IMR-90 (cell line): ENCODE measurements at regions of chr15 and their contacts with region 1.

Region 1: DNA sequence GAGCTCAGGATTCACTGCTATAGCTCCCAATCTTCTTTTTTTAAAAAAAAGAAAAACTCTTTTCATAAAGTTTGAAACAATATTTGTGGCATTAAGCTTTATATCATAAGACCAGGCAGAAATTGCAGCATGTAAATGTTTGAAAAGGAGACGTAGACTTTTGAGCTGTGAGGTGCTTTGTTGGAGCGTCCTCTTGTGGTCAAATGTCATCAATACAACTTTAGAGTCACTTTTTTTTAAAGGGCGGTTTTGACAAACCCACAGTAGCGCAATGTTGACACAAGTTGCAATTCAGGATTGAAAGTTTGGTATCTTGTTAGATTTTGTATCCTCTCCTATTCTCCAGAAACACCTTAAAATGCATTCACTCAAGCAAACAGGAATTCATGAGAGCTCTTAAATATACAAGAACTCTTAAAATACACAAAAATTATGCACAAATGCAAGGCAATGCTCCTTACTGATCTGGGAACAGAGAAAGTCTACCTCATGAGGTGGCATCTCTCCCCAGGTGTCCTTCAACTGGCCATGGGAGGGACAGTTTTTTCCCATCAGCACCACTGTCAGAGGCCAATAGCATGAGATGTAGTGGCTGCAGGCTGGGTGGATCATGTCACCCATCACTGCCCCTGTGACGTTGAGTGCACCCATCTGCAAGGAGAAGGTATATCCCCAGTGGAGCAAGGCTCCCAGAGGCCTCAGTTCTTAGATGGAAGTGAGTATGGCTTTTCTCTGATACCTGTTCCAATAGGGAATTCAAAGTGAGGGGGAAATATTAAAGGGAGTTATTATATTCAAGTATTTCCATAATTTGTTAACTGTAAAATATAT is 70.7 kb downstream of the ANXA2 start:
- DNase-seq: peak; percentile 52
- ATAC-seq: peak; percentile 81
- H3K4me3 ChIP-seq: no peak overlapping the region
- H3K27ac ChIP-seq: no peak overlapping the region
- H3K4me1 ChIP-seq: no peaks in the 10 kb centered on the region
- H3K27me3 ChIP-seq: peaks cover 39% of the 10 kb centered on the region
- CTCF ChIP-seq: peak; percentile 91
- POLR2A ChIP-seq: no peak
- RAD21 ChIP-seq: peak; percentile 86

Region 2: DNA sequence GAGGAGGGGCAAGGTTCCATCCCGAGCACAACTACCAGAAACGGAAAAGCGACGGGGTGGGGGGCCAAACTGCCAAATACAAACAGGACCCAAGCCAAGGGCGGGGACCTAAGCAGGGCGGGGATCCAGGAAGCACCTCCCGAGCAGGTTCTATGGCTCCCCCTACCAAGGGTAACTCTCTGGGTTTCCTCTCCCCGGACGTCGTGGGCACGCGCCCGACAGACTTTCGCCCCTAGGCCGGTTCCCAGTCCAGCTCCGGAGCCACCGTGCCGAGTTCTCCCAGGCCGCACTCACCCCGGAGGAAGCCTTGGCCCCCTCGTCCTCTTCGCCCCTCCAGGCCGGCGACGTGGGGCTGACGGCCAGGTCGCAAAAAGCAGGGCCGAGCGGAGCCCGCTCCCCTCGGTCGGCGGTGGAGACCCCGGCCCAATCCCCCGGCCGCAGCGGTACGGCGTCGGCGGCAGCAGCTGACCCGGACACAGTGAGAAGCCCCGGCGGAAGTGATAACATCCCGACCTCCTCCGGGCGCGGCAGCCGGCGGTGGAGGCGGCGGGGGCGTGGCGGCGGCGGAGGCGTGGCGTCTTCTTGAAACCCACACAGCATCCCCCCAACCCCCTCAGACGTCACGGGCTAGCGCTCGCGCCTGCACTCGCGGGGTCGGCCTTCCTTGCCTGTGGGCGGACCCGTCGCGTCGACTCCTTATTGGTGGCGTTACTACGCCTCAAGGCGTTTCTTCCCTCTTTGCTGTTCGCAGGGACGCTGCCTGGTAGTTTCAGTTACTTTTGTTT is 638.0 kb before region 1 on chr15 and contains the start of gene BNIP2:
- CTCF ChIA-PET with region 1: interaction called, 31 read pairs
- POLR2A ChIA-PET with region 1: no interaction called
- dilution Hi-C with region 1: no loop called
- in situ Hi-C with region 1: loop called (anchors 10 kb)
- intact Hi-C with region 1: loop called (anchors 1 kb)
- DNase-seq: peak; percentile 98
- ATAC-seq: peak; percentile 96
- H3K4me3 ChIP-seq: peak within 1 kb of the TSS; percentile 86
- H3K27ac ChIP-seq: peak within 1 kb of the TSS; percentile 88
- H3K4me1 ChIP-seq: peaks cover 5% of the 10 kb centered on the region
- H3K27me3 ChIP-seq: no peaks in the 10 kb centered on the region
- CTCF ChIP-seq: no peak
- POLR2A ChIP-seq: peak; percentile 84
- RAD21 ChIP-seq: no peak
- total RNA-seq, gene BNIP2: 47.3 and 108 TPM in 2 replicates

Region 3: GRCh38 chr15:59917504-59918157 is 409.4 kb before region 1 on chr15:
- CTCF ChIA-PET with region 1: no interaction called
- POLR2A ChIA-PET with region 1: no interaction called
- dilution Hi-C with region 1: no loop called
- in situ Hi-C with region 1: no loop called
- intact Hi-C with region 1: loop called (anchors 2 kb)
- DNase-seq: peak; percentile 10
- ATAC-seq: peak; percentile 83
- H3K4me3 ChIP-seq: no peak overlapping the region
- H3K27ac ChIP-seq: no peak overlapping the region
- H3K4me1 ChIP-seq: no peaks in the 10 kb centered on the region
- H3K27me3 ChIP-seq: no peaks in the 10 kb centered on the region
- CTCF ChIP-seq: peak; percentile 36
- POLR2A ChIP-seq: no peak
- RAD21 ChIP-seq: peak; percentile 45

Region 4: DNA sequence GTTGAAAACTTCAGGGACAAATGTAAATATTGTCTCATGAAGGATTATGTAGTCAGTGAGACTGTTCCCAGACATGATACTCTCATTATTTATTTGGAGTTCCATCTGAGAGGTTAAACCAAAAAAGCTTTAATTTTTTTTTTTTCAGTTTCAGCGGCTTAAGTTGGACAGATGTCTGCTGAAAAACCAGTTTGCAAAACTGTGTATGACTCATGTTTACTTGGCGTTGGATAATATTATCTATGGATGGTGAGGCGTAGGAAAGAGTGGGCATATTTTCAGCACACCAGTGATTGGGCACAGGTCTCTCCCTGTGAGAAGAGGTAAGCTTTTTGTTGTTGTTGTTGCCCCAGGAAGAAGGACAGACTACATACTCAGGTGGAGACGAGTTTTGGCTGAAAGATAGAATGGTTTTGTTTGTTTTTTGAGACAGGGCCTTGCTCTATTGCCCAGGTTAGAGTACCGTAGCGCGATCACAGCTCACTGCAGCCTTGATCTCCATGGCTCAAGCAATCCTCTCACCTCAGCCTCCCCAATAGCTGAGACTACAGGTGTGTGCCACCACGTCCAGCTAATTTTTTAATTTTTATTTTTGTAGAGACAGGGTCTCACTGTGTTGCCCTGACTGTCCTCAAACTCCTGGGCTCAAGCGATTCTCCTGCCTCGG is 87.1 kb after region 1 on chr15:
- CTCF ChIA-PET with region 1: no interaction called
- POLR2A ChIA-PET with region 1: no interaction called
- dilution Hi-C with region 1: no loop called
- in situ Hi-C with region 1: no loop called
- intact Hi-C with region 1: no loop called
- DNase-seq: peak; percentile 78
- ATAC-seq: peak; percentile 89
- H3K4me3 ChIP-seq: no peak overlapping the region
- H3K27ac ChIP-seq: no peak overlapping the region
- H3K4me1 ChIP-seq: peaks cover 5% of the 10 kb centered on the region
- H3K27me3 ChIP-seq: no peaks in the 10 kb centered on the region
- CTCF ChIP-seq: no peak
- POLR2A ChIP-seq: no peak
- RAD21 ChIP-seq: no peak

Region 5: DNA sequence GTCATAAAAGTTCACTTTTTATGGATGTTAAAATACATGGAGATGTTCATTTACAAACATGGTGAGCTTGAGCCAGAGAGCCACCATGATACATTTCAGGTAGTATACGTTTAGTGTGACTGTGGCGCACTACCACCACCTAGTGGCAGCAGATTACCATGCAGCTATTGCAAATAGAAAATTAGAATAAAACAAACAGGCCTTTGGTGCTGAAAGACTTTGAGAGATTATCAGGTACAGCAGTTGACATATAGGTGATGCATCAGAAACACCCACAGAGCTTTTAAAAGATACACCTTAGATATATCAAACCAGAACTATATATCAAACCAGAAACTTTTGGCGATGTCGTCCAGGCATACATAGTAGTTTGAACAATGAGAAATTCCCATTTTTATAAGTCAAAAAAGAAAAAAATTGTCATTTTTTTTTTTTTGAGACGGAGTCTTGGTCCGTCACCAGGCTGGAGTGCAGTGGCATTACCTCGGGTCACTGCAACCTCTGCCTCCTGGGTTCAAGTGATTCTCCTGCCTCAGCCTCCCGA is 193.9 kb after region 1 on chr15:
- CTCF ChIA-PET with region 1: interaction called, 3 read pairs
- POLR2A ChIA-PET with region 1: no interaction called
- dilution Hi-C with region 1: no loop called
- in situ Hi-C with region 1: no loop called
- intact Hi-C with region 1: loop called (anchors 2 kb)
- DNase-seq: peak; percentile 77
- ATAC-seq: peak; percentile 72
- H3K4me3 ChIP-seq: no peak overlapping the region
- H3K27ac ChIP-seq: no peak overlapping the region
- H3K4me1 ChIP-seq: peaks cover 10% of the 10 kb centered on the region; the same call in 1 of the 2 replicates
- H3K27me3 ChIP-seq: no peaks in the 10 kb centered on the region
- CTCF ChIP-seq: peak; percentile 87
- POLR2A ChIP-seq: no peak
- RAD21 ChIP-seq: peak; percentile 83